ENCODE measurements at regions of chr7 and their contacts with region 1.

Region 1: DNA sequence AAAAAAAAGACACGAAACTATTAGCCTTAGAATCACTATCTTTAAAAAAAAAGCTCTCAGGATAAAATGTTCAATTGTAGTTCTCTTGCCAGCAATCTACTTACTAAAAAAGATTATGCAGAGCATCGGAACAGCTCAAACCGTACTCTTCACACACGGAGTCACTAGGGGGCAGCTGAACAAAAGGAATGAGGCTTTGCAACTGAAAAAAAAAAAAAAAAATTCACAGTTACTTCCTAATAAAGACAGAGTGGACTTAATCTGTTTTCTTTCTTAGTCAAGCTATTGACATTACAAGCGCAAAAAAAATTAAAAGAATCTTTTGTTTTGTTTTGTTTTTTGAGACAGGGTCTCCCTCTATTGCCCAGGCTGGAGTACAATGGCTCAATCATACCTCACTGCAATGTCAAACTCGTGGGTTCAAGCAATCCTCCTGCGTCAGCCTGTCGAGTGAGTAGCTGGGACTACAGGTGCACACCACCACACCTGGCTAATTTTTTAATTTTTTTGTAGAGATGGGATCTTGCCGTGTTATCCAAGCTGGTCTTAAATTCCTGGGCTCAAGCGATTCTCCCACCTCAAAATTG is 11.5 kb downstream of the PMS2 start:
- DNase-seq: peak; percentile 42
- H3K4me3 Mint-ChIP-seq: no peak overlapping the region
- H3K27ac Mint-ChIP-seq: no peak overlapping the region
- H3K4me1 Mint-ChIP-seq: no peaks in the 10 kb centered on the region
- H3K27me3 Mint-ChIP-seq: no peaks in the 10 kb centered on the region

Region 2: GRCh38 chr7:5462216-5462615 is 535.1 kb before region 1 on chr7:
- CTCF ChIA-PET with region 1: no interaction called
- POLR2A ChIA-PET with region 1: no interaction called
- DNase-seq: no peak
- H3K4me3 Mint-ChIP-seq: no peak overlapping the region
- H3K27ac Mint-ChIP-seq: no peak overlapping the region
- H3K4me1 Mint-ChIP-seq: peaks cover 4% of the 10 kb centered on the region
- H3K27me3 Mint-ChIP-seq: no peaks in the 10 kb centered on the region

Region 3: GRCh38 chr7:6106140-6106904 is 109.0 kb after region 1 on chr7:
- CTCF ChIA-PET with region 1: interaction called, 26 read pairs
- POLR2A ChIA-PET with region 1: no interaction called
- DNase-seq: peak; percentile 59
- H3K4me3 Mint-ChIP-seq: peak overlapping the region; percentile 95
- H3K27ac Mint-ChIP-seq: peak overlapping the region; percentile 95
- H3K4me1 Mint-ChIP-seq: peaks cover 36% of the 10 kb centered on the region
- H3K27me3 Mint-ChIP-seq: no peaks in the 10 kb centered on the region

Region 4: DNA sequence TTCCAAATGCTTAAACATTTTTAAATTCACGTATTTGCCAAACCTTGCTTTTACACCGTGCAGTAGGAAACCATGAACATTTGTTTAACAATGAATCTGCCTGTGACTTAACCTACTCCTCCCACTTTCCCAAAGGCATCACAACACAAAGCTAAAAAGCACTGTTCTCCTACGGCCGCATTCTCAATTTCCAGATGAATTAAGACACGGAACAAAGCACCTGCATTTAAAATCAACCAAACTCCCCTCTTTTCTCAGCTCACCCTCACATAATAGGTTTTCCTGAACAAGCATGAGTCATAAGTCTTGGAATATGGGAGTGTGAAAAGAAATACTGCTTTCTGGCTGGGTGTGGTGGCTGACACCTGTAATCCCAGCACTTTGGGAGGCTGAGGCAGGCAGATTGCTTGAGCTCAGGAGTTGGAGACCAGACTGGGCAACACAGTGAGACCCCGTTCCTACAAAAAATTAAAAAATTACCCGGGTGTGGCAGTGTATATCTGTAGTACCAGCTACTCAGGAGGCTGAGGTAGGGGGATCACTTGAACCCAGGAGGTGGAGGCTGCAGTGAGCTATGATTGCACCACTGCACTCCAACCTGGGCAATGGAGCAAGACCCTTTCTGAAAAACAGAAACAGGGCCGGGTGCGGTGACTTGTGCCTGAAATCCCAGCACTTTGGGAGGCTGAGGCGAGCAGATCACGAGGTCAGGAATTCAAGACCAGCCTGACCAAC is 326.8 kb after region 1 on chr7:
- CTCF ChIA-PET with region 1: interaction called, 22 read pairs
- POLR2A ChIA-PET with region 1: no interaction called
- DNase-seq: no peak
- H3K4me3 Mint-ChIP-seq: no peak overlapping the region
- H3K27ac Mint-ChIP-seq: no peak overlapping the region
- H3K4me1 Mint-ChIP-seq: peaks cover 2% of the 10 kb centered on the region
- H3K27me3 Mint-ChIP-seq: no peaks in the 10 kb centered on the region

Region 5: GRCh38 chr7:6435486-6436384 is 438.4 kb after region 1 on chr7:
- CTCF ChIA-PET with region 1: interaction called, 13 read pairs
- POLR2A ChIA-PET with region 1: no interaction called
- DNase-seq: peak; percentile 89
- H3K4me3 Mint-ChIP-seq: peak overlapping the region; percentile 15
- H3K27ac Mint-ChIP-seq: peak overlapping the region; percentile 73
- H3K4me1 Mint-ChIP-seq: peaks cover 37% of the 10 kb centered on the region
- H3K27me3 Mint-ChIP-seq: no peaks in the 10 kb centered on the region

Measured in activated CD4-positive, alpha-beta memory T cell treated with anti-CD3 and anti-CD28 coated beads, Interleukin-2, amount 10 ng/mL, durations not matched to agents 7 days and 5 days (primary cell).